Colonic mucosa (tissue), 4 donors: ENCODE measurements at regions of chr3 and their contacts with region 1.

Region 1: GRCh38 chr3:59857589-59858346 is 807.9 kb upstream of the CFAP20DC start:
- DNase-seq: peak; percentile 84
- H3K4me3 ChIP-seq: no peak overlapping the region
- H3K27ac ChIP-seq: no peak overlapping the region
- H3K4me1 ChIP-seq: no peaks in the 10 kb centered on the region
- H3K27me3 ChIP-seq: no peaks in the 10 kb centered on the region
- CTCF ChIP-seq: peak; percentile 89

Region 2: GRCh38 chr3:59212128-59212779 is 645.5 kb before region 1 on chr3:
- intact Hi-C with region 1: loop called (anchors 10 kb)
- DNase-seq: peak; percentile 23
- H3K4me3 ChIP-seq: no peak overlapping the region
- H3K27ac ChIP-seq: no peak overlapping the region
- H3K4me1 ChIP-seq: no peaks in the 10 kb centered on the region
- H3K27me3 ChIP-seq: no peaks in the 10 kb centered on the region
- CTCF ChIP-seq: peak; percentile 67

Region 3: GRCh38 chr3:59313365-59313764 is 544.4 kb before region 1 on chr3:
- intact Hi-C with region 1: loop called (anchors 10 kb)
- DNase-seq: peak; percentile 34
- H3K4me3 ChIP-seq: no peak overlapping the region
- H3K27ac ChIP-seq: no peak overlapping the region
- H3K4me1 ChIP-seq: no peaks in the 10 kb centered on the region
- H3K27me3 ChIP-seq: no peaks in the 10 kb centered on the region
- CTCF ChIP-seq: peak; percentile 39

Region 4: DNA sequence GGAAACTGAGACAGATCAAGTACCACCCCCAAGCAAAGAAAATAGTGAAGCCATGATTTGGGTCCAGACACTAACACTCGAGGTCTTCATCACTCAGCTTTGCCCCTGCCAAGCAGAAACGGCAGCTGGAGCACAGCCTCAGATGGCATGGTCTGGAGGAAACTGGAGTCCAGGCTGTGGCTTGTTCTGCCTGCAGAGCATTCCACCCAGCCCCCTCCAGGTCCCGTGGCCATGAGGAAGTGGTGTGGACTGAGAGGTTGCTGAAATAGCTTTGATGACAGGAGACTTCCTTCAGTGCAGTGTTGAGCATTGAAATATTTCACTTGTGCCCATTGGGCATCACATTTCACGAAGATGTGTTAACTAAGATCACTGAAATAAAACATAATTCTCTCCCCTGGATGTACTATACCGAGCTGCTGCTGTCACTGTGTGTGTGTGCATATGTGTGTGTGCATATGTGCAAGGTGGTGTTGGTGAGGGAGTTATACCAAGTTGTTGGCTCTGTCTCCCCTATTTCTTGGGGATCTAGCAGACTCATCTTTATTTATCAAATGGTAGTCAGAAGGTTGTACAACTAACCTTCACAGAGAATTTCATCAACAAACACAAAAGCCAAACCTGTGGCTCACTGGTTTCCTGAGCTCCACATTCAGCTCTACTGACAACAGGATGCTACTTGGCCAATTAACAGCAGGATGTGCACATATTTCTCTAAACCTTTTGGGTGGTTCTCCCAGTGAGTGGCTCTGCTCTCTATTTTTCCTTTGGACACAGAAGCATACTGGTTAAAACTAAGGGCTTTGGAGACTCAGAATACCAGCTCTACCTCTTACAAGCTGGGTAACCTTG is 147.8 kb before region 1 on chr3:
- intact Hi-C with region 1: no loop called
- DNase-seq: peak; percentile 24
- H3K4me3 ChIP-seq: no peak overlapping the region
- H3K27ac ChIP-seq: no peak overlapping the region
- H3K4me1 ChIP-seq: no peaks in the 10 kb centered on the region
- H3K27me3 ChIP-seq: no peaks in the 10 kb centered on the region
- CTCF ChIP-seq: no peak

Region 5: GRCh38 chr3:60025096-60026050 is 167.6 kb after region 1 on chr3:
- intact Hi-C with region 1: no loop called
- DNase-seq: no peak
- H3K4me3 ChIP-seq: no peak overlapping the region
- H3K27ac ChIP-seq: no peak overlapping the region
- H3K4me1 ChIP-seq: no peaks in the 10 kb centered on the region
- H3K27me3 ChIP-seq: no peaks in the 10 kb centered on the region
- CTCF ChIP-seq: no peak